BJ (cell line): ENCODE measurements at regions of chr12 and their contacts with region 1.

Region 1: DNA sequence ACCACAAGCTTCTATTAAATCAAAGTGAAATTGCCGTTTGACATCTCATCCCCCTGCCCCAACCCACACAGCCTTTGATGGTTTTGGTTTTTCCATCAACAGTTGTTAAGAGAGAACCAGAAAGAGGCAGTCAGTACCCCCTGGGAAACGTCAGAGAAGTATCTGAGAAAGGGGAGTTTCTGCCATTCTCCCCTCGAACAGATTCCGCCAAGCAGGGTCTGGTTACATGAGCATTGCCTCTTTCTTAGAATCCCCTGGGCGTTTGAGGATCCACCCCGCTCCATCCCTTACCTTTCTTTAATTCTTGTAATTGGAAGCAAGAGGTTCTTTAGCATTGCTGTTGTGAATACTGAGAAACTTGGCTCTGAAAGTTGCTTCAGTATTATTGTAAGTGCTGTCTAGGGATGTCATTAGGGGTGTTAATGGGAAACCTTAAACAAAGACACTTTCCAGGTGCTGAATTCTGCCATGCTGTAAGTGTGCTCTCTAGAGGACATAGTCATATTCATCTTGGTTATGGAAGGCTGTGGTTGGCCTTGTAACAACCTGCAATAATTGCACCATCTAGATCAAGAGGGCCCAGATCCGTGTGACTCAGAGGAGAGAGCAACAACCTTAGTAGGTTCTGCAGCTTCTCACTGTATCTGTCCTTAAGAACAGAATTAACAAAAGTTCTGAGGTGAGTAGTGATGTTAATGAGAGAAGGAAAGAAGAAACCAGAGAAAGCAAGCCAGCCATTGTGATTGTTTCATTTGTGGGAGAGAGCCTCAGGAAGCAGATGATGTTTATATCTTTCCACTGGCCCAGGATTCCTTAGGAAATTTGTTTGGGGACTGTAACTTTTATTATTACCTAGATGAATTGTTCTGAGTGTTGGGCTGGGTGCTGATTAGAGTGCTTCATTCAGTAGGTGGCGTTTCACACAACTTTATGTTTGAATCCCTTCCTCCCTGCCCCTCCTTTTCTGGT is 9.0 kb downstream of the TMBIM6 start:
- DNase-seq: no peak
- H3K4me3 ChIP-seq: no peak overlapping the region
- H3K27me3 ChIP-seq: no peaks in the 10 kb centered on the region
- CTCF ChIP-seq: no peak

Region 2: DNA sequence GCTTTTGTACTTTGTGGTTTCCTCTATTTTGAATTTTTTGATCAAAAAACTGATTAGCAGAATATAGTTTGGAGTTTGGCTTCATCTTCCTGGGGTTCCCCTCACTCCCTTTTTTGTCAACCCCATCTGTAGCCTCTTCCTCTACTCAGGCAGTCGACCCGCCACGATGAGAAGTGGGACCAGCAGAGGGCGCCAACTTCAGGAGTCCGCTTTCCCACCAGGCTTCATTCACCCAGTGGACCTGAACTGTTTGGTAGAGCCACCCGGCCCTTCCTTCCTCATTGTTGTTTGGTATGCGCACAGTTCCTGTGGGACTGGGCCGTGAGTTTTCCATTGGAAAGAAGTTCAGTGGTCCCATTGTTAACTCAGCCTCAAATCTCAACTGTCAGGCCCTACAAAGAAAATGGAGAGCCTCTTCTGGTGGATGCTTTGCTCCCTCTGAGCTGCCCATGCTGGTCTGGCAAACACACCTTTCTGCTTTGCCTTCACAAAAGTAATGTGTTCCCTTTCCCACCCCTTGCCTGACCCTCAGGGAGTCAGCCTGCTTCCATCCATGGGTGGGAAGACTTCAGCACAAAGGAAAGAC is 12.8 kb after region 1 on chr12:
- CTCF ChIA-PET with region 1: interaction called, 14 read pairs
- POLR2A ChIA-PET with region 1: interaction called, 10 read pairs
- DNase-seq: no peak
- H3K4me3 ChIP-seq: no peak overlapping the region
- H3K27me3 ChIP-seq: no peaks in the 10 kb centered on the region
- CTCF ChIP-seq: peak; percentile 86

Region 3: GRCh38 chr12:49783917-49784676 is 33.8 kb after region 1 on chr12:
- CTCF ChIA-PET with region 1: no interaction called
- POLR2A ChIA-PET with region 1: no interaction called
- DNase-seq: peak; percentile 63
- H3K4me3 ChIP-seq: no peak overlapping the region
- H3K27me3 ChIP-seq: no peaks in the 10 kb centered on the region
- CTCF ChIP-seq: no peak